ENCODE measurements at regions of chr3 and their contacts with region 1.

Region 1: GRCh38 chr3:94862703-94863102 is 799.8 kb downstream of the NSUN3 start:
- DNase-seq: no peak
- H3K4me3 Mint-ChIP-seq: no peak overlapping the region
- H3K27ac Mint-ChIP-seq: no peak overlapping the region
- H3K4me1 Mint-ChIP-seq: no peaks in the 10 kb centered on the region
- H3K27me3 Mint-ChIP-seq: no peaks in the 10 kb centered on the region

Region 2: GRCh38 chr3:94249585-94249984 is 613.1 kb before region 1 on chr3:
- intact Hi-C with region 1: loop called (anchors 2 kb)
- DNase-seq: peak; percentile 38
- H3K4me3 Mint-ChIP-seq: no peak overlapping the region
- H3K27ac Mint-ChIP-seq: no peak overlapping the region
- H3K4me1 Mint-ChIP-seq: no peaks in the 10 kb centered on the region
- H3K27me3 Mint-ChIP-seq: peaks cover 5% of the 10 kb centered on the region

Region 3: GRCh38 chr3:96813134-96813819 is 1950.6 kb after region 1 on chr3:
- intact Hi-C with region 1: loop called (anchors 5 kb)
- DNase-seq: peak; percentile 64
- H3K4me3 Mint-ChIP-seq: peak overlapping the region; percentile 75
- H3K27ac Mint-ChIP-seq: no peak overlapping the region
- H3K4me1 Mint-ChIP-seq: peaks cover 9% of the 10 kb centered on the region
- H3K27me3 Mint-ChIP-seq: peaks cover 33% of the 10 kb centered on the region